OCI-LY7 (cell line): ENCODE measurements at regions of chr11 and their contacts with region 1.

Region 1: DNA sequence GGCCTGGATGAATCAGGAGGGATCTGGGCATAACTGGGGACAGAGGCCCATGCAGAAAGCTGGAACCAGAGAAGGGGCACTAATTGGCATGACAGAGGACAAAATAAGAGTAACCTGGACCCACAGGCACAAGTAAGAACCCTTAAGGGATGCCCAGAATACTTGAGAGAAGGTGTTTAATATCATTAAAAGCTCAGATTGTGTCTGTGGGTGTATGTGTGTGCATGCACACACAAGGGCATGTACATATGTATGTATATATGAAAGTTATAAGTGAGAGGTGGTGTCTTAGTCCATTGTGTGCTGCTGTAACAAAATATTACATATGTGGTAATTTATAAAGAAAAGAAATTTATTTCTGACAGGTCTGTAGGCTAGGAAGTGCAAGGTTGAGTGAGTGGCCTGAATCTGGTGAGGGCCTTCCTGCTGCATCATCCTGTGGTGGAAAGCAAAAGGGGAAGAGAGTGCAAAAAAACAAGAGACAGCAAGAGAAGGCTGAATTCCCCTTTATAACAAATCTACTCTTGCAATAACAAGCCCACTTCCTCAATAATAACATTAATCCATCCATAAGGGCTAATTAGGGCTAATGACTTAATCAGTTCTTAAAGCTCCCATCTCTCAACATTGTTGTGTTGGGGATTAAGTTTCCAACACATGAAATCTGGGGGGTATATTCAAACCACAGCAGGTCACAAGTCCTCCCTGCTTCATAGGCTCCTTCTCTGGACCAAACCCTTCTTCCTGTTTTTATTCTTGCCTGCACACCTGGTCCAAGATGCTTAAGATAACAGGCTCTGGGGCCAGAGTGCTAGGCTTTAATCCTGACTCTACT is 68.3 kb upstream of the POU2AF2 start:
- DNase-seq: peak; percentile 91
- H3K4me3 ChIP-seq: peak overlapping the region; percentile 53
- H3K27ac ChIP-seq: peak overlapping the region; percentile 98
- H3K4me1 ChIP-seq: peaks cover 66% of the 10 kb centered on the region
- CTCF ChIP-seq: no peak

Region 2: DNA sequence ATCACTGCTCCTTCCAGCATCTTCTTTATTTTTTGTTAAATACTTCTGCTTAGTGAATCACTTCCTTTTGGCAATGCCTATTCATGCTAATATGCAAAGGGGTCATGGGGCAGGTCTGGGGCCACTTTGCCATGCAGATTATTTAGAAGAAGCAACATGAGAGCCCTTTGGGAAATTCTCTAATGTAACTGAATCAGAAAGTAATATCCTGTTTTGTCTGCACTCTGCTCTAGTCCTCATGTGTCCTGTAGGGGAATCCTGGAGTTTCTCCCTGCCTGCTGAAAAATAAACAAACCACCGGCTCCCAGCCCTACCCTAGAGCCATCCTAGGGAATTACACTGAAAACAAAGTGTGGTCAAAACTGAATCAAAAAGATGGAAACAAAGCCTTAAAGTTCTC is 108.2 kb before region 1 on chr11:
- CTCF ChIA-PET with region 1: no interaction called
- POLR2A ChIA-PET with region 1: no interaction called
- intact Hi-C with region 1: no loop called
- DNase-seq: no peak
- H3K4me3 ChIP-seq: no peak overlapping the region
- H3K27ac ChIP-seq: no peak overlapping the region
- H3K4me1 ChIP-seq: no peaks in the 10 kb centered on the region
- CTCF ChIP-seq: no peak

Region 3: GRCh38 chr11:111162305-111162704 is 14.9 kb before region 1 on chr11:
- CTCF ChIA-PET with region 1: interaction called, 4 read pairs
- POLR2A ChIA-PET with region 1: interaction called, 10 read pairs
- intact Hi-C with region 1: no loop called
- DNase-seq: no peak
- H3K4me3 ChIP-seq: no peak overlapping the region
- H3K27ac ChIP-seq: no peak overlapping the region
- H3K4me1 ChIP-seq: no peaks in the 10 kb centered on the region
- CTCF ChIP-seq: no peak

Region 4: GRCh38 chr11:111230122-111230465 is 52.8 kb after region 1 on chr11:
- CTCF ChIA-PET with region 1: no interaction called
- POLR2A ChIA-PET with region 1: interaction called, 6 read pairs
- intact Hi-C with region 1: loop called (anchors 1 kb)
- DNase-seq: no peak
- H3K4me3 ChIP-seq: no peak overlapping the region
- H3K27ac ChIP-seq: no peak overlapping the region
- H3K4me1 ChIP-seq: peaks cover 30% of the 10 kb centered on the region
- CTCF ChIP-seq: no peak

Region 5: GRCh38 chr11:111378861-111379601 is 201.8 kb after region 1 on chr11 and contains the start of gene POU2AF1:
- CTCF ChIA-PET with region 1: no interaction called
- POLR2A ChIA-PET with region 1: interaction called, 4 read pairs
- intact Hi-C with region 1: loop called (anchors 5 kb)
- DNase-seq: peak; percentile 95
- H3K4me3 ChIP-seq: peak within 1 kb of the TSS; percentile 92
- H3K27ac ChIP-seq: peak within 1 kb of the TSS; percentile 96
- H3K4me1 ChIP-seq: peaks cover 74% of the 10 kb centered on the region
- CTCF ChIP-seq: no peak
- total RNA-seq, gene POU2AF1: 56.4 and 86.1 TPM in 2 replicates